ENCODE measurements at regions of chr3 and their contacts with region 1.

Region 1: GRCh38 chr3:56801662-56802377 is at the start of gene ARHGEF3:
- DNase-seq: peak; percentile 89 to 95
- ATAC-seq: peak; percentile 95
- H3K4me3 ChIP-seq: peak within 1 kb of the TSS; percentile 23 to 32
- H3K27ac ChIP-seq: no peak within 1 kb of the TSS
- H3K4me1 ChIP-seq: no peaks in the 10 kb centered on the region
- H3K27me3 ChIP-seq: no peaks in the 10 kb centered on the region
- total RNA-seq, gene ARHGEF3: 17.4 to 41.6 TPM

Region 2: GRCh38 chr3:55854494-55854893 is 947.3 kb before region 1 on chr3:
- intact Hi-C with region 1: no loop called
- DNase-seq: no peak
- ATAC-seq: no peak
- H3K4me3 ChIP-seq: no peak overlapping the region
- H3K27ac ChIP-seq: no peak overlapping the region
- H3K4me1 ChIP-seq: no peaks in the 10 kb centered on the region
- H3K27me3 ChIP-seq: peaks cover 0 to 1% of the 10 kb centered on the region in 2 donors

Region 3: GRCh38 chr3:56702490-56703315 is 99.1 kb before region 1 on chr3:
- intact Hi-C with region 1: loop called (anchors 5 to 10 kb)
- DNase-seq: no peak
- ATAC-seq: peak; percentile 78
- H3K4me3 ChIP-seq: no peak overlapping the region
- H3K27ac ChIP-seq: no peak overlapping the region
- H3K4me1 ChIP-seq: no peaks in the 10 kb centered on the region
- H3K27me3 ChIP-seq: no peaks in the 10 kb centered on the region

Region 4: DNA sequence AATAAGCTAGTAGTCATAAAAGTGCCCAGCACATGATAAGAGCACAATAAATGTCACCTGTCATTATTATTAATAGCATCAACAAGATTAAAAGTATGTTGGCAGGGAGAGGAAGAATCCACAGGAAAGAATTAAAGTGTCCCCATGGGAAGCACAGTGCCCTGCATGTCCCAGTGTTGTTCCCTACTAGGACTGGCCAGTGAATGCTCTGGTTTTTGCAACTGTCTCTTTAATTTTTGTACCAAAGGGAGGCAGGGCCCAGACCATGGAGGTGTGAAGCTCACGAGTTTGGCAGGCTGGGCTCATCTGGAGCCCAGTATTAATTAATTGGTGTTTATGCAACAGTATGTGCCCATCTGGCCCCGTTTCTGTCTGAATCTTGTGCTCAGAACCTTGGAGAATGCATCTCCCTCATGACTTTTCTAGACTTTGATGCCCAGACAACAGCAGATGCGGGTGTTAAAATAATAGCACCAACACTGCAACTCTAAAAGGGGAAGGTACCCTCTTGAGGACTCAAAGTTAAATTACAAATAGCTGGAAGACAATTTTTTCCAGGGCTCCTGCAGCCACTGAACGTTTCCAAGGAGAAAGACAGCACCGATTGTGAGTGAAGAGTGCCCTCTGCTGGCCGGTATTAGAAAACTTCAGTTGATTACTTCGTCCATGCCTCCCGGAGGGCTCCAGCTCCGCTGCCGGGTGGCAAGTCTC is 186.8 kb after region 1 on chr3:
- intact Hi-C with region 1: loop called (anchors 2 to 5 kb)
- DNase-seq: peak; percentile 85 to 89
- ATAC-seq: peak; percentile 88
- H3K4me3 ChIP-seq: no peak overlapping the region
- H3K27ac ChIP-seq: no peak overlapping the region
- H3K4me1 ChIP-seq: no peaks in the 10 kb centered on the region
- H3K27me3 ChIP-seq: no peaks in the 10 kb centered on the region

Region 5: GRCh38 chr3:57279685-57280084 is 477.9 kb after region 1 on chr3:
- intact Hi-C with region 1: no loop called
- DNase-seq: no peak
- ATAC-seq: no peak
- H3K4me3 ChIP-seq: no peak overlapping the region
- H3K27ac ChIP-seq: no peak overlapping the region
- H3K4me1 ChIP-seq: no peaks in the 10 kb centered on the region
- H3K27me3 ChIP-seq: no peaks in the 10 kb centered on the region

Measured in aorta (tissue), 5 donors.